IMR-90 (cell line): ENCODE measurements at regions of chr5 and their contacts with region 1.

Region 1: DNA sequence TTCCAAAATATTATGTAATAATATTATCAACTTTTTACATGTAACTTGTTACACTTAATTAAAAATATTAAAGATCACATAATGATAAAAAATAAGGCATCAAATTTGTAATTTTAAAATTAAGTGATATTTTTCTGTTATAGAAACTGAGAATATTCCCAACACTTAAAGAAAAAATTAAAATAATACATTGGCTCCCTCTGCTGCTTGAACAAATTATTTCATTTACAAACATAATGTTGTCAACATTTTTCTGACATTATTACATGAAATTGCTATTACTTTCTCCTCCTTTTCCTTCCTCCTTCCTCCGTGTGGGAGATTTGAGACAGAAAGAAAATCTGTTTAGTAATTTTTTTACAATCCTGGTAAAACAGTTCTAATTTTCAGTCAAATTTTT is 42.3 kb downstream of the RNF180 start:
- DNase-seq: peak; percentile 3
- ATAC-seq: no peak
- H3K4me3 ChIP-seq: no peak overlapping the region
- H3K27ac ChIP-seq: no peak overlapping the region
- H3K4me1 ChIP-seq: no peaks in the 10 kb centered on the region
- H3K27me3 ChIP-seq: no peaks in the 10 kb centered on the region
- CTCF ChIP-seq: peak; percentile 34
- POLR2A ChIP-seq: no peak
- RAD21 ChIP-seq: no peak

Region 2: DNA sequence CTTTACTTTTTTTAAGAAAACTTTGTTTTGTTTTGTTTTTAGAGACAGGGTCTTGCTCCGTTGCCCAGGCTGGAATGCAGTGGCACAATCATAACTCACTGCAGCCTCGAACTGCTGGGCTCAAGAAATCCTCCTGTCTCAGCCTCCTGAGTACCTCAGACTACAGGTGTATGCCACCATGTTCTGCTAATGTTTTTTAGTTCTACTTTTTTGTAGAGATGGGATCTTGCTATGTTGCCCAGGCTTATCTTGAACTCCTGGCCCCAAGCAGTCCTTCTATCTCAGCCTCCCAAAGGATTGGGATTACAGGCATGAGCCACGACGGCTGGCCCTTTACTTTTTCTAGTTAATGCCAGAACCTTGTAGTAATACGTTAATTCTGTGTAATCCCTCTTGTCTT is 1759.5 kb before region 1 on chr5:
- CTCF ChIA-PET with region 1: no interaction called
- POLR2A ChIA-PET with region 1: no interaction called
- dilution Hi-C with region 1: no loop called
- in situ Hi-C with region 1: no loop called
- intact Hi-C with region 1: loop called (anchors 10 kb)
- DNase-seq: no peak
- ATAC-seq: no peak
- H3K4me3 ChIP-seq: no peak overlapping the region
- H3K27ac ChIP-seq: no peak overlapping the region
- H3K4me1 ChIP-seq: no peaks in the 10 kb centered on the region
- H3K27me3 ChIP-seq: no peaks in the 10 kb centered on the region
- CTCF ChIP-seq: no peak
- POLR2A ChIP-seq: no peak
- RAD21 ChIP-seq: no peak

Region 3: GRCh38 chr5:62779010-62779422 is 1429.0 kb before region 1 on chr5:
- CTCF ChIA-PET with region 1: interaction called, 10 read pairs
- POLR2A ChIA-PET with region 1: no interaction called
- dilution Hi-C with region 1: no loop called
- in situ Hi-C with region 1: no loop called
- intact Hi-C with region 1: no loop called
- DNase-seq: peak; percentile 60
- ATAC-seq: peak; percentile 92
- H3K4me3 ChIP-seq: no peak overlapping the region
- H3K27ac ChIP-seq: no peak overlapping the region
- H3K4me1 ChIP-seq: no peaks in the 10 kb centered on the region
- H3K27me3 ChIP-seq: no peaks in the 10 kb centered on the region
- CTCF ChIP-seq: peak; percentile 81
- POLR2A ChIP-seq: no peak
- RAD21 ChIP-seq: peak; percentile 75

Region 4: GRCh38 chr5:63401436-63402046 is 806.4 kb before region 1 on chr5:
- CTCF ChIA-PET with region 1: no interaction called
- POLR2A ChIA-PET with region 1: no interaction called
- dilution Hi-C with region 1: no loop called
- in situ Hi-C with region 1: no loop called
- intact Hi-C with region 1: loop called (anchors 5 kb)
- DNase-seq: peak; percentile 8
- ATAC-seq: peak; percentile 51
- H3K4me3 ChIP-seq: no peak overlapping the region
- H3K27ac ChIP-seq: no peak overlapping the region
- H3K4me1 ChIP-seq: no peaks in the 10 kb centered on the region
- H3K27me3 ChIP-seq: no peaks in the 10 kb centered on the region
- CTCF ChIP-seq: peak; percentile 57
- POLR2A ChIP-seq: no peak
- RAD21 ChIP-seq: peak; percentile 56

Region 5: DNA sequence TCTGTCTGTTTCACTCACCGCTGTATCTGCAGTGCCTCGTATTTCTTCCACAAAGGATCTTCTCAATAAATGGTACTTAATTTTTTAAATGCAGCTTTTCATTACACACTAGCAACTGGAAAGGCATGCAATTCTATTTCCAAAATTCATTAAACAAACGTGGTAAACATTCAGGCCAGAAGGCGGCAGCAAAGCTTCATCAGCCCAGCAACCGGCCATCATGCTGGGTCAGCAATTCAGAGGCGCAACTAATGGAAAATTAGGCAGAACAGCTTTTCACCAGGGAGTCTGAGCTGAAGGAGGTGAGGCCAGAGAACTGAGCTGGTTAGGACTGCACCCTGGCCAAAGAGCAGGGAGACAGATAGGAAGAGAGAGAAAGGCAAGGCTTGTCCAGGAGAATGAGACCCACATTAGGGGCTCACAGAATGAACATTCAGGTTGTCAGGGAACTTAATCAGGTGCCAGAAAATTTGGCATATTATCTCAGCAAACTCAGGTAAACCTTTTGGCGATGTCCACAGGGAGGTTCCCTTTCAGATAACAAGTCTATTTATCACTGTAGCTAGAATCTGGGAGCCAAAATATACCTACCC is 60.0 kb before region 1 on chr5:
- CTCF ChIA-PET with region 1: no interaction called
- POLR2A ChIA-PET with region 1: no interaction called
- dilution Hi-C with region 1: no loop called
- in situ Hi-C with region 1: no loop called
- intact Hi-C with region 1: loop called (anchors 5 kb)
- DNase-seq: peak; percentile 24
- ATAC-seq: peak; percentile 77
- H3K4me3 ChIP-seq: no peak overlapping the region
- H3K27ac ChIP-seq: no peak overlapping the region
- H3K4me1 ChIP-seq: no peaks in the 10 kb centered on the region
- H3K27me3 ChIP-seq: no peaks in the 10 kb centered on the region
- CTCF ChIP-seq: peak; percentile 67
- POLR2A ChIP-seq: no peak
- RAD21 ChIP-seq: peak; percentile 70

Region 6: DNA sequence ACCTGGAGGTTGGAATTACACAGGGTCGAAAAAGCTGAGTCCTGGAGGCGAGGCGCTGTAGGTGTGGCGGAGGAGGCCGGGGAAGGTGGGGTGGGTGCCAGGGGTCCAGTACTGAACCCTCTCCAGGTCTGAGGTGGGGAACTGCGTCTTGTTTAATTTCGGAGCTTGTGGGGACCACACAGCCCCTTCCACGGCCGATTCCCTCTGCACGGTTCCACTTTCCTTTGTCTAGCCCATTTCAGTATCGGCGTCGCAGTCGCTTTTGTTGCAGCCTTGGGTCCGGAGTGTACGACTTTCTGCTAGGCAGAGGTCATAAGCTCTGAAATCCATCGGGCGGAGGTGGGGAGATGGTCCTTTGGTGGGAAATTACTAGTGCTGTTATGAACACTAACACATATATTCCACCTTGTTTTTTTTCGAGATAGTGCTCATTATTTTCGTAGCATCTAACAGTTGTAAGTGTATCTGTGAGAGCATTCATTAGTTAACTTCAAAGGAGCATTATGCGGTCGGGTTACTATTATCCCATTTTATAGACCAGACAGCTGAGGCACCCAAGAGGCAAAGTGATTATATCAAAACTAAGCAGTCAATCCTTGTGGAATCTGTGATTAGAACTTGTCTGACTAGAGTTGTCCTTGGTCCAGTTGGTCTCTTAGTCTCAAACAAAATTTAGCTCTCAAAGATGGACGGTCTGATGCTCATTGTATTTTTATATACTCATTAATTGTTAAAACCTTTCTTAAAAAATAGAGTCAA is 41.6 kb before region 1 on chr5:
- CTCF ChIA-PET with region 1: no interaction called
- POLR2A ChIA-PET with region 1: no interaction called
- dilution Hi-C with region 1: no loop called
- in situ Hi-C with region 1: no loop called
- intact Hi-C with region 1: no loop called
- DNase-seq: no peak
- ATAC-seq: no peak
- H3K4me3 ChIP-seq: peak overlapping the region; percentile 34; the same call in 1 of the 2 replicates
- H3K27ac ChIP-seq: no peak overlapping the region
- H3K4me1 ChIP-seq: no peaks in the 10 kb centered on the region
- H3K27me3 ChIP-seq: peaks cover 14% of the 10 kb centered on the region
- CTCF ChIP-seq: no peak
- POLR2A ChIP-seq: no peak
- RAD21 ChIP-seq: no peak

Region 7: DNA sequence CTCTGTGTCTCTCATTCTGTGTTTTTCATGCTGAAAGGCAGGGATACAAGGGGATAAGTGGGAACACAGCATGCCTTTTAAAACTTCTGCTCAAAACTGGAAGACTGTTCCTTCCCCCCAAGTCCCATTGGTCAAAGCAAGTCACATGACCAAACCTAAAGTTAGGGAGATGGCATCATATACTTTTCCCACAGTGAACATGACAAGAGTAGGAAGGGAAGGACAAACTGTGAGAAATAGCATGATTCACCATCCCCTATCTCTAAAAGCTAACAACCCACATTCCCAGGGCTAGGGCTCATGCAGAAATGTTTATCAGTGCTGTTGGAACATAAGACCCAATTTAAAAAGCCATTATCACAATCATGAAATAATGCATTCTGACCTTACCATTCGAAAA is 458.1 kb after region 1 on chr5:
- CTCF ChIA-PET with region 1: no interaction called
- POLR2A ChIA-PET with region 1: no interaction called
- dilution Hi-C with region 1: no loop called
- in situ Hi-C with region 1: no loop called
- intact Hi-C with region 1: no loop called
- DNase-seq: peak; percentile 93
- ATAC-seq: peak; percentile 94
- H3K4me3 ChIP-seq: no peak overlapping the region
- H3K27ac ChIP-seq: peak overlapping the region; percentile 74; the same call in 1 of the 2 replicates
- H3K4me1 ChIP-seq: peaks cover 3% of the 10 kb centered on the region; the same call in 1 of the 2 replicates
- H3K27me3 ChIP-seq: peaks cover 2% of the 10 kb centered on the region
- CTCF ChIP-seq: no peak
- POLR2A ChIP-seq: no peak
- RAD21 ChIP-seq: no peak

Region 8: DNA sequence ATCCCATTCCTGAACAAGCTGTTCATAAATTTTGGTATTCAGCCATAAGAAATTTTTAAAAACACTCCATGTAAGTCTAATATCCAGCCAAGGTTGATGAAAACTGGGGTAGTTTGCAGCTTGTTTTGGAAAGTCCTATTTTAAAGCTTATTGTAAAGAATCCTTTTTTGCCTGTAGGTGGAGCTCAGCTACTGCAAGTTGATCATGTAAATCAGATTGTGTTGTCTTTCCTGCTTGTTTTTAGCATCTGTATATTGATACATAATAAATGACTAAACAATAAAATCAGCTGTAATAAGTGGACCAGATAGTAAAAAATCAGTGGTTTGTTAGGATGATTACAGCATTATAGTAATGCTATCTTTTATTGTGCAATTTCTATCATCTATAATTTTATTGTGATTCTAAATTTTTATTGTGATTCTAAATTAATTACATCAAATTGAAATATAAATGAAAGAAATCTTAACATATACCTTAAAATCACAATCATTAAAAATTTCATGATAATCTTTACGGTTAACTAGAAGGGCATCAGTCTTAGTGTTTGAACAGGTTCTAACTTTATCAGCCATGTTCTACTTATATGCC is 603.2 kb after region 1 on chr5:
- CTCF ChIA-PET with region 1: no interaction called
- POLR2A ChIA-PET with region 1: no interaction called
- dilution Hi-C with region 1: no loop called
- in situ Hi-C with region 1: no loop called
- intact Hi-C with region 1: no loop called
- DNase-seq: peak; percentile 81
- ATAC-seq: peak; percentile 77
- H3K4me3 ChIP-seq: no peak overlapping the region
- H3K27ac ChIP-seq: no peak overlapping the region
- H3K4me1 ChIP-seq: no peaks in the 10 kb centered on the region
- H3K27me3 ChIP-seq: no peaks in the 10 kb centered on the region
- CTCF ChIP-seq: peak; percentile 81
- POLR2A ChIP-seq: 0 out of 2 replicates have a peak, but pooled peaks have one; percentile 30
- RAD21 ChIP-seq: peak; percentile 89